Heart left ventricle (tissue), 16 donors: ENCODE measurements at regions of chr21 and their contacts with region 1.

Region 1: GRCh38 chr21:39379986-39380891 is 31.4 kb upstream of the HMGN1 start:
- DNase-seq: peak; percentile 95 to 99 (median 98)
- ATAC-seq: peak; percentile 96 to 99 (median 99)
- H3K4me3 ChIP-seq: peak overlapping the region; percentile 49 to 99 (median 82)
- H3K27ac ChIP-seq: peak overlapping the region; percentile 79 to 97 (median 88)
- H3K4me1 ChIP-seq: peaks cover 0 to 20% (median 10%) of the 10 kb centered on the region in 12 donors
- H3K27me3 ChIP-seq: peaks cover 0 to 4% (median 0%) of the 10 kb centered on the region in 9 donors
- CTCF ChIP-seq: no peak
- POLR2A ChIP-seq: peak in 1 of 2 donors; percentile 80

Region 2: GRCh38 chr21:39319181-39319756 is 61.0 kb before region 1 on chr21:
- intact Hi-C with region 1: loop called in 2 of 10 experiments (anchors 2 to 5 kb)
- DNase-seq: peak in 4 of 5 donors; percentile 26 to 73 (median 50)
- ATAC-seq: peak; percentile 64 to 74 (median 70)
- H3K4me3 ChIP-seq: no peak overlapping the region
- H3K27ac ChIP-seq: peak overlapping the region; percentile 63 to 91 (median 78)
- H3K4me1 ChIP-seq: peaks cover 0 to 31% (median 18%) of the 10 kb centered on the region in 12 donors
- H3K27me3 ChIP-seq: no peaks in the 10 kb centered on the region
- CTCF ChIP-seq: no peak
- POLR2A ChIP-seq: no peak